Common myeloid progenitor, CD34-positive (primary cell): ENCODE measurements at regions of chr17 and their contacts with region 1.

Region 1: DNA sequence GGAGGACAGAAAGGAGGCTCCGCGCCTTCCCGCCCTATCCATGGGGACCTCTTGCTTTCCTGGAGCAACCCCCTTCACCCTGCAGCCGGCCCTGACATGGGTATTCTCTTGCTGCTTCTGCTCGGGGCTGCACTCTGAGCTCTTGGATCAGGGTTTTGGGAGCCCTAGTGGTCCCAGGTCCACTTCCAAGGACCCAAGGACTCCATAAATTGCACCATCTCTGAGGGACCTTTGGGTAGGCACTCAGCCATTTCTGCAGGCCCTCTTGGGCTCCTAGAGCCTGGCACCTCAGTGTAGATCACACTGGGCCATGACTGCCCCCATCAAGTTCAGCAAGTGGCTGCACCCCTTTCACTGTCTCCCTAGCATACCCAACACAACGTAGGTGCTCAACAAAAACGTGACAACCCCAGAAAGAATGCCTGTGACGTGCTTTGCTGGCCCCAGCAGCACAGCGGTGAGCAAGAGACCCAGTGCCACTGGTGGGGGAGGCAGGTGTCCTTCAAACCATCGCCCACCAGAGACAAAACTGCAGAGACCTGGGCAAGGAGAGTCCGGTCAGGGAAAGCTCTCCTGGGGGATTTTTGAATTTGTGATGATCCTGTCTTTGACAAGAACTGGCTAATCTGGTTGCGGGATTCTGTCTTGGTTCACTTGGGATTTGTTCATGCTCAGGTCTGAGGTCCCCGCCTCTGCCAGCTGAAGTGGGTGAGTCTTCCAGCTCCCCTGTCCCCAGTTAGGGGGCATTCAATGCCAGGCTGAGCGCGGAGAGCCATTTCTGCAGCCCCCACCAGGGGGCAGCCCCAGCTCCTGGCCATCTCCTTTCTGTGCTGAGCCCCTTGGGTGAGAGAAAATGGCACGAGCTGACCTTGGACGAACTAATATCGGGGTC is 2.5 kb upstream of the RAB11FIP4 start:
- DNase-seq: peak; percentile 52 to 61 (median 57)
- H3K4me3 ChIP-seq: no peak overlapping the region
- H3K27ac ChIP-seq: no peak overlapping the region
- H3K4me1 ChIP-seq: peaks cover 0 to 15% (median 12%) of the 10 kb centered on the region in 4 experiments
- H3K27me3 ChIP-seq: peaks cover 3 to 44% (median 38%) of the 10 kb centered on the region in 5 experiments

Region 2: DNA sequence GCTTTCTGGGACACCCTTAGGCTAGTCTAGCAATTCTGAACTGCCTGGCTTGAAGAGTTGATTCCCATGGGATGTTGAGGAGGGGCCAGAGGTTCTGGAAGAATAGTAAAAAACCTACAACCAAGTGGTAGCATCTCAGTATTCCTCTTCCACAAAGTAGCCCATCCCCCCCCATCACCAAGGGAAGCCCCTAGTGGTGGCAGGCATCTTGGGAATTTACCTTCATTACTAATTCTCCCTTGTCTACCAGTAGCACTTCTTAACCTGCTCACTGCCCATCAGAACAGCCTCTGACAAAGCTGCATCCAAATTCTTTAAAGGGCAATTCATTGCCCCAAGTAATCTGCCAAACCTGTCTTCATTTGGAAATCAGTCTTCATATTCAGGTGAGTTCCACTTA is 10.4 kb before region 1 on chr17:
- CTCF ChIA-PET with region 1: interaction called, 10 read pairs
- POLR2A ChIA-PET with region 1: no interaction called
- DNase-seq: peak in 1 of 3 donors; percentile 10
- H3K4me3 ChIP-seq: no peak overlapping the region
- H3K27ac ChIP-seq: no peak overlapping the region
- H3K4me1 ChIP-seq: peaks cover 0 to 5% (median 0%) of the 10 kb centered on the region in 4 experiments
- H3K27me3 ChIP-seq: no peaks in the 10 kb centered on the region

Region 3: DNA sequence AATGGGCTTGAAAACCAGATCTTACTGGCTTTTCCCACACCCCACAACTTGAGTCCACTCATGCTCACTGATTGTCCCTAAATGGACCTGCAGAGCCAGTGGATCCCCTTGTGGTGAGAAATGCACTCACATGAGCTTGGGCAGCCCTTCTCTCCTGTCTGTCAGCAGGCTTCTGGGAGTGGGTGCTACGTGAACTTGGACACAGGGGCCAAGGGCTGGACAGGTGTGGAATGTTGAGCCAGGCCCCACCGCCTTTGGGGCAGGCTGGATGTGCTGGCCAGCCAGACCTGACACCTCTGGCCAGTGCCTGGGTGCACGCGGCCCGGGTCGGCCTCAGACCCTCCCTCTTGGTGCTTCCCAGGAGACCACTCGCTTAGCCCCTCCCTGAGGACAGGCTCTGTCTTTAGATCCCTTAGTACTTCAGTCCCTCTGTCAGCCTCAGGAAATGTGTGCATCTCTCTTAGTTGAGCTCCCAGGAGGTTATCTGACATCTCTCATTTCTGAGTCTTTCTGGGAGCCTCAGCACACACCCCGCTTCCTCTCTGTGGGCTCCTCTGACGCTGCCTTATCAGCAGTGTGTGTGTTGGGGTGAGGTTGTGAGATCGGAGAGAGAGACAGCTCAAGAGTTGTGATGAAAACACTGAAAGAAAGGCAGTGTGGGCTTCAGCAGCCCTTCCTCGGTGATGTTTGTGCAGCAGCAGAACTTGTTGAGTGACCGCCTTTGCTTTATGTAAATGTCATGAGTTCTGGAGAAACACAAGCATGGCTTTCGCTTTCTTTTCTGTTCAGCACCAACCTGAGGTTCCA is 119.5 kb after region 1 on chr17:
- CTCF ChIA-PET with region 1: interaction called, 25 read pairs
- POLR2A ChIA-PET with region 1: no interaction called
- DNase-seq: peak; percentile 72 to 90 (median 84)
- H3K4me3 ChIP-seq: peak overlapping the region; percentile 3 to 78 (median 44)
- H3K27ac ChIP-seq: peak overlapping the region in 1 of 2 experiments; percentile 51
- H3K4me1 ChIP-seq: peaks cover 0 to 41% (median 36%) of the 10 kb centered on the region in 4 experiments
- H3K27me3 ChIP-seq: no peaks in the 10 kb centered on the region

Region 4: GRCh38 chr17:31524926-31525800 is 136.1 kb after region 1 on chr17:
- CTCF ChIA-PET with region 1: interaction called, 56 read pairs
- POLR2A ChIA-PET with region 1: no interaction called
- DNase-seq: peak; percentile 68 to 80 (median 75)
- H3K4me3 ChIP-seq: no peak overlapping the region
- H3K27ac ChIP-seq: no peak overlapping the region
- H3K4me1 ChIP-seq: peaks cover 0 to 4% (median 0%) of the 10 kb centered on the region in 4 experiments
- H3K27me3 ChIP-seq: no peaks in the 10 kb centered on the region